ENCODE measurements at regions of chr6 and their contacts with region 1.

Region 1: GRCh38 chr6:151014404-151015100 is 149.1 kb downstream of the MTHFD1L start:
- DNase-seq: peak; percentile 65
- ATAC-seq: peak; percentile 86
- H3K4me3 ChIP-seq: no peak overlapping the region
- H3K27ac ChIP-seq: peak overlapping the region; percentile 79
- H3K4me1 ChIP-seq: peaks cover 20% of the 10 kb centered on the region
- H3K27me3 ChIP-seq: no peaks in the 10 kb centered on the region
- CTCF ChIP-seq: peak; percentile 98

Region 2: GRCh38 chr6:150681578-150682395 is 332.8 kb before region 1 on chr6:
- CTCF ChIA-PET with region 1: no interaction called
- POLR2A ChIA-PET with region 1: no interaction called
- in situ Hi-C with region 1: no loop called
- intact Hi-C with region 1: no loop called
- DNase-seq: no peak
- ATAC-seq: no peak
- H3K4me3 ChIP-seq: no peak overlapping the region
- H3K27ac ChIP-seq: no peak overlapping the region
- H3K4me1 ChIP-seq: no peaks in the 10 kb centered on the region
- H3K27me3 ChIP-seq: no peaks in the 10 kb centered on the region; the same call in 1 of the 2 replicates
- CTCF ChIP-seq: no peak

Region 3: GRCh38 chr6:151136141-151136755 is 121.7 kb after region 1 on chr6:
- CTCF ChIA-PET with region 1: interaction called, 10 read pairs
- POLR2A ChIA-PET with region 1: no interaction called
- in situ Hi-C with region 1: no loop called
- intact Hi-C with region 1: no loop called
- DNase-seq: no peak
- ATAC-seq: peak; percentile 67
- H3K4me3 ChIP-seq: no peak overlapping the region
- H3K27ac ChIP-seq: no peak overlapping the region
- H3K4me1 ChIP-seq: peaks cover 3% of the 10 kb centered on the region; the same call in 1 of the 2 replicates
- H3K27me3 ChIP-seq: no peaks in the 10 kb centered on the region
- CTCF ChIP-seq: no peak

Region 4: GRCh38 chr6:151148111-151148510 is 133.6 kb after region 1 on chr6:
- CTCF ChIA-PET with region 1: no interaction called
- POLR2A ChIA-PET with region 1: no interaction called
- in situ Hi-C with region 1: no loop called
- intact Hi-C with region 1: no loop called
- DNase-seq: no peak
- ATAC-seq: peak; percentile 57
- H3K4me3 ChIP-seq: no peak overlapping the region
- H3K27ac ChIP-seq: no peak overlapping the region
- H3K4me1 ChIP-seq: no peaks in the 10 kb centered on the region
- H3K27me3 ChIP-seq: no peaks in the 10 kb centered on the region
- CTCF ChIP-seq: no peak

Region 5: DNA sequence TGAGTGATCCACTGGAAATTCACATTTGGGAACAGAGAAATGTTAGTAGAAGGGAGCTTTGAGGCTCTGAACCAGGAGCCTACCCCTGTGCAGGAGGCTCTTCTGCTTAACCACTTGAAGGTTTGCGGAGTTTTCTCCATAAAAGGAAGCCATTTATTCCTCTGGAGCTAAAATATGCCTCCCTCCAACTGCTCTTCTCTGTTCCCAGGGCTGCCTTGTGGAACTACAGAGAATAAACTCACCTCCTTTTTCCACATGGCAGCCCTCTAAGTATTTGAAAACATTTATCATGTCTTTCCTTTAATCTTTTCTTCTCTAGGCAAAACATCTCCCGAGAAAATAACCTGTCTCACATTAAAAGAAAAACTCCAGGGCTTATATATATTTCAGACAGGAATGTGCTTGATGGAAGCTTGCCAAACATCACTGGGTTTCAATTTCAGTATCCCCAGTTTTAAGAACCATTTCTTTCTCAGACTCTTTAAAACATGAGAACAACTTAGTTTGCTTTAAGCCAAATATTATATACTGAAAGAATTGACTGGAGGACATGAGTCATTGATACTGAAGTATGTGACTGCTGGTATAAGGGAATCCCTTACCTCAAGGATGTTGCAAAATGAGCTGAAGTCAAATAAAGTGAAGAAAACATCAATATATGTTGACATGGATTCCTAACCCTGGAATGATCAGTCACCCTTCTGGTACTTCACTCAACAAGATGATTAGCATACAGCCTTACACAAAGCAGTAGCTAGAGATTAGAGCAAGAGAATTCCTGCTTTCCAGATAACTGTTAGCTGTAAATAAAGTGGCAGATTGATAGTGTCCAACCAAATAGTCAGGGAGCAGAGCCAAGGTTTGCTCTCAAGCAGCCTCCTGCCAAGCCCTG is 302.8 kb after region 1 on chr6:
- CTCF ChIA-PET with region 1: no interaction called
- POLR2A ChIA-PET with region 1: interaction called, 10 read pairs
- in situ Hi-C with region 1: no loop called
- intact Hi-C with region 1: no loop called
- DNase-seq: no peak
- ATAC-seq: peak; percentile 17; the same call in 1 of the 2 replicates
- H3K4me3 ChIP-seq: no peak overlapping the region
- H3K27ac ChIP-seq: no peak overlapping the region
- H3K4me1 ChIP-seq: no peaks in the 10 kb centered on the region
- H3K27me3 ChIP-seq: no peaks in the 10 kb centered on the region
- CTCF ChIP-seq: no peak

Measured in Panc1 (cell line).